Natural killer cell (primary cell): ENCODE measurements at regions of chr3 and their contacts with region 1.

Region 1: DNA sequence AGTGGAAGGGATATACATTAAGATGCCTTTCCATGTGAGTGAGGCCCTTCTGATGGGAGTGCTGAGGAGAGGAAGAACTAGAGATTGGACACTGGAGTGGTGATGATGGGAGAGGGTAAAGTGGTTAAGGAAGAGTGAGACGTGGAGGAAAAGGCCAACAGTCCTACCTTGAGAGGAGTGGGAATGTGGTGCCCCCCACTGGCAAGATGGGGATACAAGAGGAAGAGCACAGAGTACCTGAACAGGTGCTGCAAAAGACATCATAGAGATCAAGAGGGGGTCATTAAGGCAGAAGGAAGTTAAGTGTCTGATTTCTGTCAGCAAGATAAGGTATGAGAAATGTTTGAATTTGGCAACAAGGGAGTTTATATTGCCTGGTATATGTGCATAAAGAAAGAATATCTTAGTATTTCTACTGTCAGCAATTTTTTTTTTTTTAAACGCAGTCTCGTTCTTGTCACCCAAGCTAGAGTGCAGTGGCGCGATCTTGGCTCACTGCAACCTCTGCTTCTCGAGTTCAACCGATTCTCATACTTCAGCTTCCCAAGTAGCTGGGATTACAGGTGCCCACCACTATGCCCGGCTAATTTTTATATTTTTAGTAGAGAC is 34.0 kb downstream of the ARIH2 start:
- DNase-seq: peak; percentile 30 to 76
- ATAC-seq: peak in 2 of 3 donors; percentile 77 to 79
- H3K4me3 ChIP-seq: no peak overlapping the region
- H3K4me3 Mint-ChIP-seq: no peak overlapping the region
- H3K27ac ChIP-seq: no peak overlapping the region
- H3K27ac Mint-ChIP-seq: peak overlapping the region; percentile 4 to 53
- H3K4me1 ChIP-seq: no peaks in the 10 kb centered on the region
- H3K4me1 Mint-ChIP-seq: peaks cover 12 to 21% of the 10 kb centered on the region in 2 donors
- H3K27me3 ChIP-seq: no peaks in the 10 kb centered on the region
- H3K27me3 Mint-ChIP-seq: no peaks in the 10 kb centered on the region
- CTCF ChIP-seq: peak; percentile 50

Region 2: DNA sequence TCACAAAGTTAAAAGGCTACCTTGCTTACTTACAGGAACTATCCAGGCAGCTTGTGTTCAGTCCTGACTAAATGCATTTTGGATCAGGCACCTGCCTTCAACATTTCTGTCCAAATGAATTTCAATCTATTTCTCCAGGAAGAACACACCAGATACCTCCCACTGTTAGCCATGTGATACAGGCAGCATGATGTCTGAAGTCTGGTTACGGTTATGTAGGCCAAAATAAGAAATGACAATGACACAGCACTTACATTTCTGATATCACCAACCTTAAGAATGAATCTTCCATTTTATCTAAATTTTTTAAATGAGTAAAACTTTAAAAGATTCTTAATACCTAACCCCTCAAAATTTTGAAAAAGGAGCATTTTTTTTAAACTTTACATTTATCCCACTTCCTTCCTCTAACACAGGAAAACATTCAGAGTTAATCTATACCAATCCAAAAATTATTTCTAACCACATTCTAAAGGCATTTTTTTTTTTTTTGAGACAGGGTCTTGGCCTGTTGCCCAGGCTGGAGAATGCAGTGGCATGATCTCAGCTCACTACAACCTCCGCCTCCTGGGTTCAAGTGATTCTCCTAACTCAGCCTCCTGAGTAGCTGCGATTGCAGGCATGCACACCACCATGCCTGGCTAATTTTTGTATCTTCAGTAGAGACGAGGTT is 936.2 kb before region 1 on chr3 and contains the start of gene MAP4:
- intact Hi-C with region 1: no loop called
- DNase-seq: no peak
- ATAC-seq: no peak
- H3K4me3 ChIP-seq: no peak within 1 kb of the TSS
- H3K4me3 Mint-ChIP-seq: no peak within 1 kb of the TSS
- H3K27ac ChIP-seq: no peak within 1 kb of the TSS
- H3K27ac Mint-ChIP-seq: peak within 1 kb of the TSS; percentile 50 to 70
- H3K4me1 ChIP-seq: peaks cover 4% of the 10 kb centered on the region
- H3K4me1 Mint-ChIP-seq: peaks cover 38 to 51% of the 10 kb centered on the region in 2 donors
- H3K27me3 ChIP-seq: no peaks in the 10 kb centered on the region
- H3K27me3 Mint-ChIP-seq: no peaks in the 10 kb centered on the region
- CTCF ChIP-seq: no peak
- total RNA-seq, gene MAP4: 74.5 to 97.1 (median 88.9) TPM

Region 3: DNA sequence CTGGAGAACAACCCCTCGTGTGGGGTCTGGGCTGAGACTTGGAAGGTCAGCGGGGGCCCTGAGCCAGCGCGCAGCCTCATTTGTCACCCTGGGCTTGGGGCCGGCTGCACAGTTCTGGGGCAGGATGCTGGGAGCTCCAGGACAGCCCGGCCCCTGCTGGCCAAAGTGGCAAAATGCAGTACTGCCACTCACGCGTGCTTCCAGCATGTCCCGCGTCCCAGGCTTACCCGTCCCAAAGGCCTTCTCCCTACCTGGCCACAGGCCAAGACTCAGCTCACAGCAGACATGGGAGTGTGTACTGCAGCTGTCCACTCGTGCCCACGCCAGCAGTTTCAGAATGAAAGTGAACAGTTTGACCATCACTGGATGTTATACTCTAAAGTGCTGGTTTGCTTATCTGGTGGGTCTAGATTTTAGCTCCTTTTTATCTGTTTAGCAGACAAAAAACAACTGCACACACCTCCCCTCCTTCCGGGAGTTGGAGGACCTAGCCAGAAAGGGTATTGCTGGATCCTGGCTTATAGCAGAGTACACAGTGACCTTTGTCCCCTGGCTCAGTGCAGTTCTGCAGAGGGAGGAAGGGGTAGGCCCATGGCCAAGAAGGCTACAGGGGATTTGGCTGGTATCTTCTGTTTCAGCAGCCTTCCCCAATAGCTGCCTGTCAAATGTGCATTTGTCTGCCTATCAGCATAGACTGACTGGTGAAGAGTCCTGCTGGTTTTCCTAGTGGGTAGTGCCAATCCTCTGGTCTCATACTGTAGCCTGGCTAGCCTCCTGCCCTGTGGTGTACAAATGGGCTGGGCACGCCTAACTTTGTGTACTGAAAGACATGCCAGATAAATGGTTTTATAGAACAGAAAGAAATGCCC is 212.4 kb before region 1 on chr3:
- intact Hi-C with region 1: loop called (anchors 1 kb)
- DNase-seq: peak; percentile 48 to 68
- ATAC-seq: peak; percentile 84 to 97 (median 95)
- H3K4me3 ChIP-seq: no peak overlapping the region
- H3K4me3 Mint-ChIP-seq: no peak overlapping the region
- H3K27ac ChIP-seq: no peak overlapping the region
- H3K27ac Mint-ChIP-seq: no peak overlapping the region
- H3K4me1 ChIP-seq: peaks cover 6% of the 10 kb centered on the region
- H3K4me1 Mint-ChIP-seq: no peaks in the 10 kb centered on the region
- H3K27me3 ChIP-seq: no peaks in the 10 kb centered on the region
- H3K27me3 Mint-ChIP-seq: no peaks in the 10 kb centered on the region
- CTCF ChIP-seq: peak; percentile 65